Activated T-helper 2 cell treated with anti-CD3 and anti-CD28 coated beads, Interferon-gamma antibody, Interleukin-2, Interleukin-4, amounts not matched to agents 10 μg/mL and 5 μg/mL and 100 μg/mL, durations not matched to agents 14 hours and 24 hours and 36 hours (primary cell): ENCODE measurements at regions of chr5 and their contacts with region 1.

Region 1: DNA sequence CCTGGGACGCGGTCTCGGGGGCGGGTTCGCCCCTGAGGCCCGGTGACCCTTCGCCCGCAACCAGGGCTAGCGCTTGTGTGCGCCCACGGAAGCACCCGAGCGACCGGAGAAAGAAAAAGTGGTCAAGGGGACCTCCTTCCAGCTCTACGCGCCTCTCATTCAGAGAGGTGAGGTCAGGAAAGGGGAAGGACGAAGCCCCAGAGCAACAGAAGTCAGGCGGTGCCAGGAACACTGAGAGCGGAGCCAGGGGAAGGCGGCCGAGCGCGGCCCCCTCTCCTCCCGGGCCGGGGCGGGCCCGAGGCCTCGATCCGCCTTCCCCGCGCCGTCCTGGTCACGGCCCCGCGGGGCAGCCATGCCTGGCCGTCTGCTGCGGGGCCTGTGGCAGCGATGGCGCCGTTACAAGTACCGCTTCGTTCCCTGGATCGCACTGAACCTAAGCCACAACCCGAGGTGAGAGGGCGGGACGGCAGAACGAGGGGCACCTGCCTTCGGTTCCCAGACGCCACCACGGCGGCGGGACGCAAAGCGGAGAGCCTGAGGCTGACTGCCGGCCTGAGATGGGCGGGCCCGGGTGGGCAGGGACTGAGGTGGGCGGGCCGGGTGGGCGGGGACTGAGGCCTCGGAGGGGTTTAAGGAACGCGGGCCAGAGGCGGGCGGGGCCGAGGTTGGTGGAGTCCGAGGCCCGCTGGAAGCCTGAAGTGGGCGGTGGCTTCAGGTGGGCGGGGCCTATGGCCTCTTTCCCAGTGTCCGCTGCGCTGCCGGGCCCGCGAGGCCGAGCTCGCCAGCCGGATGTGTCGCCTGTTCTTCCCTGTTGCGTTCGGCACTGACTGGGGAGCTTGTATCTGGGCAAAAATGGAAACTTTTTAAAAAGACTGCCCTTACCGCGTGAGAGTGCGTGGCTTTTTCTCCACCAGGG is at the start of gene SETD9:
- DNase-seq: peak; percentile 91
- H3K4me3 Mint-ChIP-seq: peak within 1 kb of the TSS; percentile 86
- H3K27ac Mint-ChIP-seq: peak within 1 kb of the TSS; percentile 96
- H3K4me1 Mint-ChIP-seq: peaks cover 22% of the 10 kb centered on the region
- H3K27me3 Mint-ChIP-seq: peaks cover 10% of the 10 kb centered on the region
- total RNA-seq, gene SETD9: 11.0 and 13.1 TPM in 2 replicates

Region 2: DNA sequence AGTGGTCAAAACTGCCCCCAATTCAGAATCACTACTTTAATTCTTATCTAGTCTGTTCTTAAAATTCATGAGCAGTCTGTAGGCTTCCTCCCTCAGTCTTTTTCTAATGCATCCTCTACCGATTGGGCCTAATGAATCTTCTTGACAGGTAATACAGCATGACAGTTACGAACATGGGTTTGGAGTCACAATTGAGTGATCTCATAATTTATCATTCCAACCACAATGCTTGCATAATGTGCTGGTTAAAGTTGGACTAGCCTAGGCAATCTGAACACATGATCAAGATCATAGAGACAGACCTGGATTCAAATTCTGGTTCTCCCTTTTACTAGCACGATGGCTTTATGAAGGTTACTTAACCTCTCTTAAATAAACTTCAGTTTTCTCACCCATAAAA is 33.2 kb before region 1 on chr5:
- intact Hi-C with region 1: no loop called
- DNase-seq: no peak
- H3K4me3 Mint-ChIP-seq: no peak overlapping the region
- H3K27ac Mint-ChIP-seq: no peak overlapping the region
- H3K4me1 Mint-ChIP-seq: peaks cover 13% of the 10 kb centered on the region
- H3K27me3 Mint-ChIP-seq: no peaks in the 10 kb centered on the region

Region 3: GRCh38 chr5:56951946-56952691 is 42.6 kb after region 1 on chr5 and contains the start of gene MIER3:
- intact Hi-C with region 1: loop called (anchors 1 kb)
- DNase-seq: peak; percentile 77
- H3K4me3 Mint-ChIP-seq: peak within 1 kb of the TSS; percentile 97
- H3K27ac Mint-ChIP-seq: peak within 1 kb of the TSS; percentile 82
- H3K4me1 Mint-ChIP-seq: peaks cover 23% of the 10 kb centered on the region
- H3K27me3 Mint-ChIP-seq: peaks cover 40% of the 10 kb centered on the region
- total RNA-seq, gene MIER3: 24.1 and 28.3 TPM in 2 replicates

Region 4: GRCh38 chr5:57117596-57117995 is 208.0 kb after region 1 on chr5:
- intact Hi-C with region 1: loop called (anchors 2 kb)
- DNase-seq: peak; percentile 66
- H3K4me3 Mint-ChIP-seq: no peak overlapping the region
- H3K27ac Mint-ChIP-seq: peak overlapping the region; percentile 73
- H3K4me1 Mint-ChIP-seq: peaks cover 20% of the 10 kb centered on the region
- H3K27me3 Mint-ChIP-seq: peaks cover 2% of the 10 kb centered on the region